ENCODE measurements at regions of chrX and their contacts with region 1.

Region 1: DNA sequence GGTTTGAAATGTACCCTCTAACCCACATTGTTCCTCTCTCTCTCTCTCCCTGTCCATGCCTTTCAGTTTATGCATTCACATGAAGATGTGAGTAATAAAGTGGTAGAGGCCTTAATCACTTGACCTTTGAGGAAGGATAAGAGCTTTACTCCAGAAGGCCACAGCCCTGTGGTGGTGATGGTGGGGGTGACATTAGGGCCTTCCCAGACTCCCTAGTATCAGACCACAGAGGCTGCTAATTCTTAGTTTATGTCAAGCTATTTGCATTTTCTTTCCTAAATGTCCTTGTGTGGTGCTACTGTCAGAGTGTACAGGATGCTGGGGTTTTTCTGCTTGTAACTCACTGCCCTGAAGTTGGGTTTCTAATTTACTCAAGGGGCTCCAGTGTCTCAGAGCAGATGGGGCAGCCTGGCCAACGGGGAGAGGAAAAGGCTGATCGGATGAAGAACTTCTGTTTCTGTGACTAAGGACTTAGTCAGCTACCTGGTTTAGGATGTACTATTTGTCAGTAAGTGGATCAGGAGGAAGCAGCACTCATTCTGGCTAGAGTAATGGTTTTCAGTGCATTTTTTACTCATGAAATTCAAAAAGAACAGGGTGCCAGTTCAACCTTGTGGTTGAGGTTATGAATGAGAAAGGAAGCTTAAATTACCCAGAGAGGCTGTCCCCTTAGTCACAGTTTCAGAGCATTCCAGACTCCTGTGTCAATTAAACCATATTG is 509.6 kb upstream of the DIPK2B start:
- DNase-seq: peak; percentile 12
- H3K4me3 Mint-ChIP-seq: no peak overlapping the region
- H3K27ac Mint-ChIP-seq: peak overlapping the region; percentile 87
- H3K4me1 Mint-ChIP-seq: peaks cover 44% of the 10 kb centered on the region
- H3K27me3 Mint-ChIP-seq: no peaks in the 10 kb centered on the region

Region 2: DNA sequence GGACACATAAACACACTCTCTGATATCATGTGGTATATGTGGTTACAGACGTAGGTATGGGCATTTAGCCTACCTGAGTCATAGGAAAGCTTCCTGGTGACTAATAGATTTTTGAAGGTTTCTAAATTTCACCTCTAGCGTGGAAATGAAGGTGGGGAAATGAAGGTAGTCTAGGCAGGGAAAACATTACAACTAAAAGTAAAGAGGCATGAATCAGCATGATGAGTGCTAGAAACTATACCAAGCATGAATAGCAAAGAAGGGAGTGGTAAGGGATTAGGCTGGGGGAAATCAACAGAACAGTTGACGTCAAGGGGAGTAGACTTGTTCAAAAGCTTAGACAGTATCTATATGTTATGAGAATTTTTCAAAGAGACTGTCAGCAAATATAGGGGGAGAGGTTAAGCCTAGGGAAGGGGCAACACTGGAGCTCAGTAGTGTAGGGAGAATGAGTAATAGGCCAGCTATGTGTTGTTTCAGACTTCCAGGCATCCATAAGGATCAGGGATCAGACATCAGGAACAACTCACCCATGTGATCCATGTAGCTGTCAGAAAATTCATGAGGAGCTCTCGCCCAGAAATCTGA is 230.3 kb before region 1 on chrX:
- intact Hi-C with region 1: no loop called
- DNase-seq: no peak
- H3K4me3 Mint-ChIP-seq: no peak overlapping the region
- H3K27ac Mint-ChIP-seq: no peak overlapping the region
- H3K4me1 Mint-ChIP-seq: peaks cover 6% of the 10 kb centered on the region
- H3K27me3 Mint-ChIP-seq: no peaks in the 10 kb centered on the region

Region 3: DNA sequence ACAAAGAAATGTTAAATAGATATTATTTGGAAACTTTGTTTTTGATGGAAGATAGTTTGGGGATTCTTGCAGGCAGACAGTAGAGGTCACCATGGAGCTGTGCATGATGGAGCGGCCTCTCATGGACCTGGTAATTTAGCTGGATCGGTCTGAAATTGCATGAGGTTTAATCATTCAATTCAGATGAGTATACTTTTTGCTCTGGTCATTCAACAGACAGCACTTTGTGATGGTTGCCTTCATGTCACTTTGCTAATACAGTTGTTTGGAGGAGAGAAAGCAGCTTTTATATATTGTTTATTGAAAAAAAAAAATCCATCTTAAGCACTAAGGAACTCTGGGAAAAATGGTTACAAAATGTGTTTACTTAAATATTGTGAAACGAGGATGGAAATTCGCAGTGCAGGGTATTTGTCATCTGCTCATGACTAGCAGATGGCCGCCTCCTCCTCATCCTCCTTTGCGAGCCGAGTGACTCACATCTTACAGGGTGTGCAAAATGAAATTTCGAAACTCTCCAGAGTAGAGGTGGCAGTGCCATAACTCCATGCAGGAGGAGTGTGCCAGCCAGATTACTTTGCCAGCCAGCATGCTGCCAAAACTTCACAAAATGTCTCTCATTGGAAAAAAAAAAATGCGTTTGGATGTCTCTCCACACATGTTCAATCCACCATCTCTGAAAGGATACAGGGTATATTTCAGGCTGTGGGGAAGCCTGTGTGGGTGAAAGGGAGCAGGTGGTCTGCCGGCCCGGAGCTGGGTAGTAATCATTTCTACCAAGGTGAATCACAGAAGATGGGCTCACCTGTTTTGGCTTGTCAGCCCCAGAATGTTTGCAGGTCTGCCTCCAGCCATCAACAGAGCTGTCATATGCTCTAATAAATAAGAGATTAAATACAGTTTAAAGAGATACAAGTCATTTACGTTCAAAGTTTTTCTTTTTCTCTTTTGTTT is 194.7 kb before region 1 on chrX:
- intact Hi-C with region 1: loop called (anchors 1 kb)
- DNase-seq: peak; percentile 9
- H3K4me3 Mint-ChIP-seq: peak overlapping the region; percentile 42
- H3K27ac Mint-ChIP-seq: peak overlapping the region; percentile 55
- H3K4me1 Mint-ChIP-seq: peaks cover 23% of the 10 kb centered on the region
- H3K27me3 Mint-ChIP-seq: no peaks in the 10 kb centered on the region

Region 4: DNA sequence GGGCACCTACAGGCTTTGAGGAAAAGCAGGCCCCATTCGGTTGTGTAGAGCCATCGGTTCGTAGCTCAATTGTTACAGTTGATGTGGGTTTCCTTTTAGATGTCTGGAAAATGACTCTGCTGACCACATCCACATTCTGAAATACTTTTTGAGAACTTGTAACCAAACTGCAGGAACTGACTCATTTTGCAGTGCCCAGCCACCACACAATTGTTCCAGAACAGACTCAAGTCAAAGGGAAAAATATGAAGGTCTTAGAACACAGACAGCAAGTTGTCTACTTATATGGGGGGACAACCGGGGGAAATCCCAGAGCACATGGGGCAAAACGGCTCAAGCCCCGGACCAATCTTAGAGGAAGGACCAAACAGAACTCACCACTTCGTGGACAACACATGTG is 48.1 kb after region 1 on chrX:
- intact Hi-C with region 1: loop called (anchors 1 kb)
- DNase-seq: peak; percentile 38
- H3K4me3 Mint-ChIP-seq: peak overlapping the region; percentile 64
- H3K27ac Mint-ChIP-seq: peak overlapping the region; percentile 98
- H3K4me1 Mint-ChIP-seq: peaks cover 65% of the 10 kb centered on the region
- H3K27me3 Mint-ChIP-seq: no peaks in the 10 kb centered on the region

Region 5: GRCh38 chrX:46208225-46208854 is 498.1 kb after region 1 on chrX:
- intact Hi-C with region 1: loop called (anchors 10 kb)
- DNase-seq: no peak
- H3K4me3 Mint-ChIP-seq: no peak overlapping the region
- H3K27ac Mint-ChIP-seq: no peak overlapping the region
- H3K4me1 Mint-ChIP-seq: peaks cover 27% of the 10 kb centered on the region
- H3K27me3 Mint-ChIP-seq: no peaks in the 10 kb centered on the region

Region 6: DNA sequence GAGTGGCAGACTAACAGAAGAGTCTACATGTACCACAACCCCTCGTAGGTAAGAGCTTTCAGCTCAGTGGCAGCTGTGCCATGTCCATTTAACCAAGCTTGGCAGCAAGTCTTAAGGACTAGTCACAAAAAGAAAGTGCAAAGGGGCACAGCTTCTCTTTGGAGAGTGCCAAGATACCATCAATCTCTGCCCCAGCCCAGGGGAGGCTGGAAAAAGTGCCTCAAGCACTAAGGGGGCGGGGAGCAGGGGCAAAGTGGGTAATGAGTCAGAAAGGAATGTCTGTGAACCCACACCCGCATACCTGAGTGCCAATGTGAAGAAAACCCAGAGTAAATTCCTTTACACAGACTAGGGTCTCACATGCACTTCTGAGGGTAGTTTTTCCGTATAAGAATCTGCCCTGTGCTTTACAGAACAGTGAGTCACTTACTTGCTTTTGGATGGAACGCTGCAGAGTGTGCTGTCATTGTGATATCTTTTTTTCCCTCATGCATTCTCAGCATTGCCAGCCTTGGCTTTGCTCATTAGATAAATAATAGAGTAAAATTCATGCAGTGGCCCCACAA is 615.2 kb after region 1 on chrX:
- intact Hi-C with region 1: loop called (anchors 2 kb)
- DNase-seq: peak; percentile 10
- H3K4me3 Mint-ChIP-seq: no peak overlapping the region
- H3K27ac Mint-ChIP-seq: peak overlapping the region; percentile 69
- H3K4me1 Mint-ChIP-seq: peaks cover 52% of the 10 kb centered on the region
- H3K27me3 Mint-ChIP-seq: no peaks in the 10 kb centered on the region

Measured in activated T-helper 2 cell treated with anti-CD3 and anti-CD28 coated beads, Interferon-gamma antibody, Interleukin-2, Interleukin-4, amounts not matched to agents 10 μg/mL and 5 μg/mL and 100 μg/mL, durations not matched to agents 14 hours and 24 hours and 36 hours (primary cell).